RWPE1 (cell line): ENCODE measurements at regions of chr15 and their contacts with region 1.

Region 1: DNA sequence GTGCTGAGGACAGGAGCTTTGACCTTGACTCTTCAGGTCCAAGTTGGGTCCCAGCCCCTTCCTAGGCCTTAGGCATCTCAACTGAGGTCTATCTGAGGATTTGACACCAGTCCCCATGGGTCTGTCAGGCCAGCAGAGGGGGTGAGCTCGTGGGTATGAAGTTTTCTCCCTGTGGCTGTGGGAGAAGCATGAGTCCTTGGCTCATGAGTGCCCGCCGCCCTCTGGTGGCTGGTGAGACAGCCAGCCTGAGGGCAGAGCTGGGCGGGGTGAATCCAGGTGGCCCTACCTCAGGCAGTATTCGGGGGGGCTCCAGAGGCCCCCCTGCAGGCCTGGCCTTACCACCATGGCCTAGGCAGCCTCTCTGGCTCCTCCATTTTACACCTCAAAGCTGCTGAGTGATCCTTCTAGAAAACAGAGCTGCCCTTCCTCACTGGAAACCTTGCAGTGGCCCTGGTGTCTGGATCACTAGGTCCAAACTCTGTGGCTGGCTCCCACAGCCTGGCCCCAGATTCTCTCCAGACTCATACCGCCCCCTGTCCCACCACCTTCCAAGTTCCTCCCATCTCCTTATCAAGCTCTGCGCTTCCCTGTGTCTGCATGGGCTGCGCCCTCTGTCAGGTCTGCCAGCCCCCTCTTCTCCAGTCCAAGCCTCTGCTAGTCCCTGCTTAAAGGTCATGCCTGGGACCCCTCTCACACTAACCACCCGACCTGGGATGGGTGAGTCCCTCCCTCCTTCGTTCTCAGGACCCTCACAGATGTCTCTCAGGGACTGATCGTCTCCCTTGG is 16.1 kb downstream of the SH2D7 start:
- DNase-seq: peak; percentile 84
- H3K27ac ChIP-seq: no peak overlapping the region
- CTCF ChIP-seq: peak; percentile 98

Region 2: GRCh38 chr15:77959432-77959879 is 149.0 kb before region 1 on chr15:
- CTCF ChIA-PET with region 1: interaction called, 44 read pairs
- POLR2A ChIA-PET with region 1: no interaction called
- DNase-seq: peak; percentile 94
- H3K27ac ChIP-seq: no peak overlapping the region
- CTCF ChIP-seq: peak; percentile 99

Region 3: GRCh38 chr15:77966540-77967290 is 141.8 kb before region 1 on chr15:
- CTCF ChIA-PET with region 1: interaction called, 43 read pairs
- POLR2A ChIA-PET with region 1: no interaction called
- DNase-seq: peak; percentile 87
- H3K27ac ChIP-seq: peak overlapping the region; percentile 25; the same call in 1 of the 2 replicates
- CTCF ChIP-seq: peak; percentile 97

Region 4: DNA sequence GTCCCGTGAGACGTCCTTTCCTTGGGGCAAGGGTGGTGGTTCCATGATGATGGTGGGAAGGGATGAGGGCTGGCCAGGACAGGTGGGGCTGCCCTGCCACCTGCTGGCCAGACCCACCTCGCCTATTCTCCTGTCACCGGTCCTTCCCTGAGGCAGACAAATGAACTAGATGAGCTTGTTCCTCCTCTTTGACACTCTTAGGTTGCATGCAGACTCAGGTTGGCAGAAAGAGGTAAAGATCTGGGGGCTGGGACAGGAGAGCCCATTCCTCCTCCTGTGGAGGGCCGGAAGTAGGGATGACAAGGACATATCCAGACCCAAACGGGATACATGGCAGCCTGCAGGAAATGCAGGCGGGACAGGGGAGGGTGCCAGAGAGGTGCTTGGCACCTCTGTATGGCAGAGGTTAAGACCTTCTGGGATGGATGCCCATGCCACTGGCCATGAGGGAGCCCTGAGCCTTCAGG is 87.3 kb after region 1 on chr15:
- CTCF ChIA-PET with region 1: interaction called, 30 read pairs
- POLR2A ChIA-PET with region 1: no interaction called
- DNase-seq: peak; percentile 67
- H3K27ac ChIP-seq: no peak overlapping the region
- CTCF ChIP-seq: peak; percentile 83

Region 5: DNA sequence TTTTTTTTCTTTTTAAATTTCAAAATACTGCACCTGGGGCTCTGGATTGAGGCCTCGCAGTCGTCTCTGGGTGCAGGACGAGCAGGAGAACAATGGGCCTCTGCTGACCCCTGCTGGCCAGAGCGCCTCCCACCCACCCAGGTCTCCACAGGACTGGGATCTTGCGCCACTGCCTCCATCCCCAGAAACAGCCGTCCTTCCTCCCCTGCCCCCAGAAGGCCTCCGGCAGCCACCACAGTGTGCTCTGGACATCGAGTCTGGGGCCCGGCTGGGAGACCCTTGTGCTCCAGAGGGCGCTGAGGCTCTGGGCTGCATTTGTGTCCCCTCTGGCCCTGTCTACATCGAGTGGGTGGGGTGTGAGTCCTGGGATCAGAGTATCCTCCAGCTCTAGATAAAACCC is 132.5 kb after region 1 on chr15:
- CTCF ChIA-PET with region 1: interaction called, 13 read pairs
- POLR2A ChIA-PET with region 1: no interaction called
- DNase-seq: peak; percentile 89
- H3K27ac ChIP-seq: no peak overlapping the region
- CTCF ChIP-seq: peak; percentile 95